MCF 10A (cell line): ENCODE measurements at regions of chr17 and their contacts with region 1.

Region 1: DNA sequence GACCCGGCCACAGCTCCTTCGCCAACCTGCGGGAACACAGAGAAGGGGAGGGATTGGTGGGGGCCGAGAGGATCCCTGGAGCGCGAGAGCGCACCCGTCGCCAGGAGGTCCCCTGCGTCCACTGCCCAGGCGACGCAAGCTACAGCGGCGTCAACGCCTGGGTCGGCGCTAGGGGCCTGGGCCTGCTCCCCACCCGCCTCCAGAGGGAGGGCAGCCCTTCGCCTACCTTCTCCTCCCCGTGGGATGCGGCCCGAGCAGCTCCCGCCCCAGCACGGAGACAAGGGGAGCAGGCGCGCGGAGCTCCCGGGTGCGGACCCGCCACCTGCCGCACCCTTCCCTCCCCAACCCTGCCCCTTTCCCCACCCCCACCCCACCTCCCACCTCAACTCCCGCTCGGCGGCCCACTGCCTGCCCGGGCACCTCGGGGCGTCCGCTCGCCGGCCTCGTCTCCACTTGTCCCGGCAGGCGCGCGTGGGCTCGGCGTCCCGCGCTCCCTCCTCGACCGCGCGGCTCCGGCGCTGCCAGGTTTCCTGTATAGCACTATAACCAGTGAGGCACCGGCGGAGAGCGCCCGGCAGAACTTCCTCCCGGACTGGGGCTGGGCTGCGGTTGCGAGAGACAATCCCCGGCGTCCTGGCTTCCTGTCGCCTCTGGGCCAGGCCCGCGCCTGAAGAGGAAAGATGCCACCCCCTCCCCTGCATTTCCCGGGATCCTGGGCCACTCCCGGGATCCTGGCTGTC is 119.1 kb upstream of the SMURF2 start:
- DNase-seq: peak; percentile 37
- H3K4me3 Mint-ChIP-seq: peak overlapping the region; percentile 75
- H3K27ac Mint-ChIP-seq: peak overlapping the region; percentile 9
- H3K4me1 Mint-ChIP-seq: peaks cover 9% of the 10 kb centered on the region
- H3K27me3 Mint-ChIP-seq: no peaks in the 10 kb centered on the region
- CTCF ChIP-seq: no peak

Region 2: DNA sequence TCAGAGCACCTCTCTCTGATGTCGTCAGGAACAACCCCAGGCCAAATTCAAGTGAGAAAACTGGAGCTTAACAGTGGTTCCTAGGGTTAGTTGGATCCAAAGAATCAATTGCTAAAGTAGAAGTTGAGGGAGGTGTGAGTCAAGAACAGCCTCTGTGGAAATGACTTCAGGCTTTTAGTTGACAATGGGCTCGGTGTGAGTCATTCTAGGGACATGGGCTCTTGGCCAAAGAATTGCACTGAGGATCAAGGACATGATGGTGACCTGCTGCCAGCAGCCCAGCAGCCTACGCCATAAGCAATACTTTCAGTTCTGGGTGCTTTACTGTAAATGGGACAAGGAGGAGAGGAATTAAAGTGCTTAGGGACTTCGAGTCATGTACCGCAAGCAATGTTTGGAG is 87.0 kb before region 1 on chr17:
- CTCF ChIA-PET with region 1: no interaction called
- POLR2A ChIA-PET with region 1: no interaction called
- intact Hi-C with region 1: no loop called
- DNase-seq: peak; percentile 89
- H3K4me3 Mint-ChIP-seq: peak overlapping the region; percentile 4
- H3K27ac Mint-ChIP-seq: no peak overlapping the region
- H3K4me1 Mint-ChIP-seq: peaks cover 7% of the 10 kb centered on the region
- H3K27me3 Mint-ChIP-seq: no peaks in the 10 kb centered on the region
- CTCF ChIP-seq: no peak

Region 3: GRCh38 chr17:64920026-64920418 is 138.8 kb after region 1 on chr17:
- CTCF ChIA-PET with region 1: interaction called, 5 read pairs
- POLR2A ChIA-PET with region 1: interaction called, 8 read pairs
- intact Hi-C with region 1: loop called (anchors 2 kb)
- DNase-seq: no peak
- H3K4me3 Mint-ChIP-seq: peak overlapping the region; percentile 77
- H3K27ac Mint-ChIP-seq: peak overlapping the region; percentile 89
- H3K4me1 Mint-ChIP-seq: no peaks in the 10 kb centered on the region
- H3K27me3 Mint-ChIP-seq: no peaks in the 10 kb centered on the region
- CTCF ChIP-seq: no peak

Region 4: DNA sequence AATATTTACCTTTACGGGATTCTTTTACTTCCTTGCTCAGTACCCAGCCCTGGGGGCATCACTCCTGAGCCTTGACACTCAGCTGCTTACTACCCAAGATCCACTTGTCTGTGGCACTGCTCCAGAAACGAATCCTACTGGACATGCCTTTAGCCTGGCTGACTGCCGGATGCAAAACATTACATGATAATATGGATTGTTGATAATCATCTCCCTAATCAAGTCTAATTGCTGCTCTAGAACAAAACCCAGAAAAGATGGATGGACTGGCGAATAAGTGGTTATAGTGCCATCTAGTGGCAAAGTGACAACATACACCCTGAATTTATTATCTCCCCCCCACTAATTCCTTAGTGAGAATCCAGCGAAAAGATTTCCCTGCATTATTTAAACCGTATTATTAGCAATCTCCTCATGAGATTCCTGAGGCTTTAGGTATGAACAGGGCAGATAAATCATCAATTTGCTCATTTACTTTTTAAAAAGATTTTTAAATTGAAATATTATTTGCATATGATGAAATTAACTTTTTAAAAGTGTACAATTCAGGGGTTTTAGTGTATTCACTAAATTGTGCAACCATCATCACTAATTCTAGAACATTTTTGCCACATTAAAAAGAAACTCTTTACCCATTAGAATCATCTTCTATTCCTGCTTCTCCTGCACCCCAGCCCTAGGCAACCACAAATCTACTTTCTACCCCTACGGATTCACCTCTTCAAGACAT is 417.6 kb after region 1 on chr17:
- CTCF ChIA-PET with region 1: interaction called, 4 read pairs
- POLR2A ChIA-PET with region 1: no interaction called
- intact Hi-C with region 1: loop called (anchors 5 kb)
- DNase-seq: peak; percentile 63
- H3K4me3 Mint-ChIP-seq: no peak overlapping the region
- H3K27ac Mint-ChIP-seq: no peak overlapping the region
- H3K4me1 Mint-ChIP-seq: peaks cover 8% of the 10 kb centered on the region
- H3K27me3 Mint-ChIP-seq: no peaks in the 10 kb centered on the region
- CTCF ChIP-seq: peak; percentile 63